ENCODE measurements at regions of chr15 and their contacts with region 1.

Region 1: DNA sequence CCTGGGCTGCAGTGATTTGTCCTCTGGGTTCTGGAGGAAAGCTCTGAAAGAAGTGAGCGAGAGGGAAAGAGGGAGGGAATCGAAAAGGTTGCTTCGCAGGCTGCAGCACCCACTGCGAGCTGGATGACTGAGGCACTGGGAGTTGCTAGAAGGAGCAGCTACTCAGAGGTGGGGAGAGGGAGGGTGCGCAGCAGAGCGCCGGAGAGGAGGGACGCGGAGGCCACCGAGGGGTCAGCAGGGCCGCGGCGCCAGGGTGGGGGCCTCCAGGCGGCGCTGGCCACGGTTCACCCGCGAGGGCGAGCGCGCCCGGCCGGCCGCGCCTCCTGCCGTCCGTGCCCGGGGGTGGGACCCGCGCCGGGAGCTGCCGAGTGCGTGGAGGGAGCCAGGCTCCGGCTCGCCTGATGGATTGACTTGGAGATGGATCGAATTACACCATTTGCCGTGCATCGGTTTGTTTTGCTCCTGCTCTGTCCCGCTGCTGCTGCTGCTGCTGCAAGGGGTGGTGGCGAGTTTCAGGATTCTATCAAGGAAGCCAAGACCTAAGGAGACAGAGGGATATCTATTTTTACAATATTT is at the start of gene SEMA6D:
- DNase-seq: peak; percentile 81
- total RNA-seq, gene SEMA6D: 9.9 TPM

Region 2: DNA sequence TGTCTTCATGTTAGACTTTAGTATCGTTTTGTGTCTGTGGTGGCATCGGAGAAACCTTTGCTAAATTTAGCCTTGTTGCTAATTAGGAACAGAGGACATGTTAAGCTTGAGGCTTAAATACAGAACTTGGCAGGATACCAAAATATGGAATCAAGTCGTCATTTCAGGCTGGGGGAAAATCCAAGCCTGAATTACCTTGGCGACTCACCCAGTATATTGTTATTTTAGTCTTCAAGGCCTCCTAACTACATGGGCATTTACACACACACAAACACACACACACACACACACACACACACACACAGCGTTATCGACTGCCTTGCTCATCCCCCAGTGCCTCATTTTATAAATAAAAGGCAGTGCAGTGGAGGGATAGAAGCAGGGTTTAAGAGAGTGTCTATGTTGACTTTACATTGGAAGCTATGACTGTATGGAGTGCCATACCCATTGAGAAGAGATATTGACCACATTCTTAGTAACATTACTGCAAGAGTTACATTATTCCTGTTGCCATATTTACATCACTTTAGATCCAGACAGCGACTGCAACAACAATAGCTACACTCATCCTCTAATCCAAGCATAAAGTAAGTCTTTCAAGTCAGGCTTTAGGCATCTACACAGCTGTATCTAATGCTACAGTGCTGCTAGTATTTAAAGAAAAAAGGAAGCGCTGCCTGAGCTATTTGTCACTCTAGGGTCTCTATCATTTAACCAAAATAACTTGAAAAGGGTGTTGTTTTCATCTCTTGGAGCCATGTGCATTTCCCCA is 210.6 kb before region 1 on chr15:
- intact Hi-C with region 1: loop called (anchors 5 kb)
- DNase-seq: no peak

Region 3: GRCh38 chr15:47773163-47773562 is 56.0 kb after region 1 on chr15:
- intact Hi-C with region 1: no loop called
- DNase-seq: no peak

Region 4: GRCh38 chr15:47820780-47821319 is 103.7 kb after region 1 on chr15:
- intact Hi-C with region 1: no loop called
- DNase-seq: no peak

Region 5: GRCh38 chr15:47870956-47871625 is 154.0 kb after region 1 on chr15:
- intact Hi-C with region 1: loop called (anchors 5 kb)
- DNase-seq: no peak

Measured in cardiac septum (tissue), 1 donor.